Thyroid gland (tissue), 4 donors: ENCODE measurements at regions of chr15 and their contacts with region 1.

Region 1: GRCh38 chr15:63600616-63601025 is 3.4 kb downstream of the FBXL22 start:
- DNase-seq: peak; percentile 94
- H3K4me3 ChIP-seq: peak overlapping the region in 2 of 3 donors; percentile 70
- H3K27ac ChIP-seq: peak overlapping the region; percentile 83 to 91 (median 84)
- H3K4me1 ChIP-seq: peaks cover 32 to 52% of the 10 kb centered on the region in 2 donors
- H3K27me3 ChIP-seq: no peaks in the 10 kb centered on the region
- CTCF ChIP-seq: peak in 3 of 6 experiments; percentile 32 to 43 (median 37)
- POLR2A ChIP-seq: peak; percentile 39 to 96

Region 2: DNA sequence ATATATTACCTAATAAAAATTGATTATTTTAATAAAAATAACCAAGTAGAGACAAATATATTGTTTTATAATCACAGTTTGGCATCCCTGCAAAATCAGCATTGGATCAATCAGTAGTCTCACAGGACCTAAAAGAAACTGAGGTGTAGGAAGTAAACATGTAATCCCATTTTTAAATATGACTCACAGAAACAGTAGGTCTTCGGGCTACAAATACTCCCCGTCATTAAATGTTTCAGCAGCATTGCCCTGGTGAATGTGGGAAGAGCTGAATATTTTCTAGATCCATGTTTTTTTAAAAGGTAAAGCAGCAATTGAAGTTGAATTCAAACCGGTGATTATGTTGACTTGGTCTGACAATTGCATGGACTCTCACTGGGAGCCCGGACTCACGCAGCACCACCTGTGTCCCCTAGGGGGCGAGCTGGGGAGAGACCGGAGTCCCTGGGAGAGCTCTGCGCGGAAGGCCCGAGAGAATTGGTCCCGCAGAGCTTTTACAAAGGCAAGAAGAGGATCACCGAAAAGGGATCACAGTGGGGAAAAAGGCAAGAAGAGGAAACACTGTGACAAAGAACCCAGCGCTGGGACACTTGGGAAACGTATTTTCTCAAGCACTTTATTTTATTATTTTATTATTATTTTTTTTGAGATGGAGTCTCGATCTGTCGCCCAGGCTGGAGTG is 113.4 kb before region 1 on chr15:
- intact Hi-C with region 1: loop called (anchors 5 kb)
- DNase-seq: peak; percentile 84 to 91
- H3K4me3 ChIP-seq: no peak overlapping the region
- H3K27ac ChIP-seq: no peak overlapping the region
- H3K4me1 ChIP-seq: peaks cover 4 to 6% of the 10 kb centered on the region in 2 donors
- H3K27me3 ChIP-seq: no peaks in the 10 kb centered on the region
- CTCF ChIP-seq: peak; percentile 76 to 96 (median 86)
- POLR2A ChIP-seq: no peak

Region 3: GRCh38 chr15:63504247-63504978 is 96.2 kb before region 1 on chr15 and contains the start of gene USP3:
- intact Hi-C with region 1: loop called (anchors 5 kb)
- DNase-seq: peak; percentile 93 to 94
- H3K4me3 ChIP-seq: peak within 1 kb of the TSS; percentile 57 to 89 (median 79)
- H3K27ac ChIP-seq: peak within 1 kb of the TSS; percentile 87 to 95 (median 93)
- H3K4me1 ChIP-seq: peaks cover 31 to 55% of the 10 kb centered on the region in 2 donors
- H3K27me3 ChIP-seq: no peaks in the 10 kb centered on the region
- CTCF ChIP-seq: peak in 3 of 6 experiments; percentile 24 to 58 (median 45)
- POLR2A ChIP-seq: peak in 1 of 2 donors; percentile 89
- total RNA-seq, gene USP3: 42.9 to 82.2 (median 53.7) TPM

Region 4: DNA sequence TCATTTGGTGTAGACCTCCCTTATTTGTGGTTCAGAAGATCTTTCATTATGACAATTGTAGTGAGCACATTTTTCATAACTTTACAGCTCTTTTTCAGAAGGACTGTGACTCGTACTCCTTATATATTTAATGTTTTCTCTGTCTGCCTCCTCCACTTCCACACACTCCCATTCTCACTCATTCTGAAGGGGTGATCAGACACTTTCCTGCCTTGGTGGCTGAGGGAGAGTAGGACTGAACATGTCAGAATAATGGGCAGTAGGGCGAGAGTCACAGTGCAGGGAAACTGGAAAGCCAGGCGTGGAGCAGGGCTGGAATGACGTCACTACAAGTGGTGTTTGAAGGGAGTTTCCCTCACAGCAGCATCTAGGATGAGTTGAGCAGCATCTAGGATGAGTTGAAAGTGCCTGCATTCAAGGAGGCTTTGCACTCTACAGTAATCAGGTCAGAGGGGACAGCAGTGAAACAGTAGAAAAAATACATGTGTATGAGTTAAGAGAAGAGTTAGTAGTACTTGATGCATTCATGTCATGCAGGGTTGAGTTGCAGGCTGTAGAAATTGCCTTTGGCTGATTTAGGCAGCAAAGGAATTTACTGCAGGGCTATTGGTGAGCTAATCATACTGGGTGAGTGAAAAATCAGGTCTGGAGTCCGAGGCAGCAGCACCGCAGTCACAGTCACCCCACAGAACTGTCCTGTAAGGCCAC is 39.7 kb before region 1 on chr15:
- intact Hi-C with region 1: no loop called
- DNase-seq: no peak
- H3K4me3 ChIP-seq: no peak overlapping the region
- H3K27ac ChIP-seq: no peak overlapping the region
- H3K4me1 ChIP-seq: no peaks in the 10 kb centered on the region
- H3K27me3 ChIP-seq: no peaks in the 10 kb centered on the region
- CTCF ChIP-seq: no peak
- POLR2A ChIP-seq: no peak

Region 5: DNA sequence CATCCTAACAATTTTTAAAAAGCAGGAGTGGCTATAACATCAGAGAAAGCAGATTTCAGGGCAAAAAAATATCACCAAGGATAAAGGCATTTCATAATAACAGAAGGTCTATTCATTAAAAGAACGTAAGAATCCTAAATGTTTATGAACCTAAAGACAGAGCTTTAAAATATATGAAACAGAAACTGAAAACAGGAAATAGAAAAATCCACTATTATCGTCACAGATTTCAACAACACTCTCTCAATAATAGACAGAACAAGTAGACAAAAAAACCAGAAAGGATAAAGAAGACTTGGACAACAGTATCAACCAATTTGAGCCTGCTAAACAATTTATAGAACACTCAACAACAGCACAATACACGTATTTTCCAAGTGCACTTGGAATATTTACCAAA is 68.0 kb after region 1 on chr15:
- intact Hi-C with region 1: no loop called
- DNase-seq: no peak
- H3K4me3 ChIP-seq: no peak overlapping the region
- H3K27ac ChIP-seq: no peak overlapping the region
- H3K4me1 ChIP-seq: peaks cover 0 to 5% of the 10 kb centered on the region in 2 donors
- H3K27me3 ChIP-seq: no peaks in the 10 kb centered on the region
- CTCF ChIP-seq: no peak
- POLR2A ChIP-seq: no peak

Region 6: GRCh38 chr15:63945007-63945788 is 344.6 kb after region 1 on chr15:
- intact Hi-C with region 1: no loop called
- DNase-seq: peak; percentile 70 to 80
- H3K4me3 ChIP-seq: no peak overlapping the region
- H3K27ac ChIP-seq: peak overlapping the region; percentile 69 to 98 (median 90)
- H3K4me1 ChIP-seq: peaks cover 39 to 63% of the 10 kb centered on the region in 2 donors
- H3K27me3 ChIP-seq: no peaks in the 10 kb centered on the region
- CTCF ChIP-seq: peak; percentile 69 to 95 (median 80)
- POLR2A ChIP-seq: no peak

Region 7: DNA sequence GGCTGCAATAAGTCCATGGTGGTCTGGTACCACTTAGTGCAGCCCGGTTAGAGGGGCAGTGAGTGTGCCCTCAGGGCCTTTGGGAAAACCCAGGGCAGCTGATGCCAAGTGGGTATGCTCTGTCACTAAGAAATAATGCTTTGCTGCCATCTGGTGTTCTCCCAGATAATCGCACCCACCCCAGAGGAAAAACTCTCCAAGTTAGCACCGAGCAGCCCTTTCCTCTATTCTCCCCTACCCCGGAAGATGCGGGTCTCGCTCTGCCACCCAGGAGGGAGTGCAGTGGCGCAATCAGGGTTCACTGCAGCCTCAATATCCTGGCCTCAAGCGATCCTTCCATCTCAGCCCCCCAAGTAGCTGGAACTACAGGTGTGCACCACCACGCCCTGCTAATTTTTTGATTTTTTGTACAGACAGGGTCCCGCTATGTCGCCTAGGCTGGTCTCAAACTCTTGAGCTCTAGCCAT is 467.0 kb after region 1 on chr15:
- intact Hi-C with region 1: loop called (anchors 10 kb)
- DNase-seq: peak; percentile 66
- H3K4me3 ChIP-seq: no peak overlapping the region
- H3K27ac ChIP-seq: no peak overlapping the region
- H3K4me1 ChIP-seq: peaks cover 0 to 23% of the 10 kb centered on the region in 2 donors
- H3K27me3 ChIP-seq: no peaks in the 10 kb centered on the region
- CTCF ChIP-seq: peak; percentile 56 to 89 (median 81)
- POLR2A ChIP-seq: no peak